Ovary (tissue), 10 donors: ENCODE measurements at regions of chr10 and their contacts with region 1.

Region 1: DNA sequence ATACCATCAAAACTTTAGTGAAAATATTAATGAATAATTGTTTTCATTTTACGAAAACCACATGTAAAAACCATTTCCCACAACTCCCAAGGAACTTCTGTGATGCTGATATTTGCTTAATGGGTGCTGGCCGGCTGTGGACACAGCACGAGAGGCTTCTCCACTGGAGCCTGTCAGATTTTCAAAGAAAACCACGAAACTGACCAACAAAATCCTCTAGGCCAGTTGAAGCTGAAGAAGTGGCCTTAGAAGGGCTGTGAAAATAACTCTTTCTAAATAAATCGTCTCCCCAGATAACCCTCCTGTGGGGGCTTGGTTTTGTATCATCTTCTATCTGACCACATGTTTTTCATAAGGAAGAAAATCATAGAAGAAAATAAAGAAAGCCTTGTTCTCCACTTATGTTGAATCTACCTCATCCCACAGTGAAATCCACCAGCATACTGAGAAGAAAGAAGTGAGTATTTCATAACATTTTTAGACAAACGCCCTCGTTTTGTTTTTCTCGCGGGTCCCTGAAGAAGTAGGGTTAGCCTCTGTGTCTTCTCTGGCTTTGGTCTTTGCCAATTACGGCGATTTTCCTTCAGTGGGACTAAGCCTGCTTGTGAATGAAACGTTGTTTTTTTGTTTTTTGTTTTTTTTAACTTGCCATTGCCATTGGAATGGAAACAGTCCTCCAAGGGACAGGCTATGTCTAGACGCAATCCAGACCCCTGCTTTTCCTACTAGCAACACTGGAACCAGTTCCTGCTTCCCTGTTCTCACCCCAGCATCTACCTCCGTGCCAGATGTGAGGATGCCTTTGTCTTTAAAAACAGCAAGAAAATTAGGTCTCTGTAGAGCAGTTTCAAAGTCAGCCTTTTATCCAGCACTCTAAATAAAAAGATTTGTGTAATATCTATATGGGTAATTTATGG is 123.9 kb downstream of the ADAM12 start:
- DNase-seq: no peak
- H3K4me3 ChIP-seq: no peak overlapping the region
- H3K27ac ChIP-seq: peak overlapping the region; percentile 5 to 62
- H3K4me1 ChIP-seq: peaks cover 17% of the 10 kb centered on the region
- H3K27me3 ChIP-seq: no peaks in the 10 kb centered on the region
- CTCF ChIP-seq: no peak
- EP300 ChIP-seq: no peak
- POLR2A ChIP-seq: no peak

Region 2: DNA sequence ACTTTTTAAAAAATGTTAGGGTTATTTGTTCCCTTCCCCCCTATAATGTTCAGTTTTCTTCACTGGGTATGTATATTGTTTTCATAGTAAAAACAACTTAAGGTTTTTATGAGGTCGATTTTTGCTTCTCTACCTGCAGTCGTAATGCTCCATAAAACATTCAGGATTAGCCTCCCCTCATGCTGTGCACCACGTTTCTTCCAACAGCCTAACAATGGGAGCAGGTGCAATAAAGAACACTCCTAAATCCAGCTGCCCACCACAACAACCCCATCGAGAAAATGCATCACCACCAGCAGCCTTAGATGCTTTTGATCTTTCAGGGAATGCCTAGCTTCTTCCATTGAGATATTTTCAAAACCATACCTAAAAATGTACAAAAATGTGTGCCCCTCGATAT is 12.8 kb after region 1 on chr10:
- intact Hi-C with region 1: loop called in 1 of 4 experiments (anchors 2 kb)
- DNase-seq: no peak
- H3K4me3 ChIP-seq: no peak overlapping the region
- H3K27ac ChIP-seq: no peak overlapping the region
- H3K4me1 ChIP-seq: peaks cover 1% of the 10 kb centered on the region
- H3K27me3 ChIP-seq: no peaks in the 10 kb centered on the region
- CTCF ChIP-seq: no peak
- EP300 ChIP-seq: no peak
- POLR2A ChIP-seq: no peak